HEK293 (cell line): ENCODE measurements at regions of chr3 and their contacts with region 1.

Region 1: DNA sequence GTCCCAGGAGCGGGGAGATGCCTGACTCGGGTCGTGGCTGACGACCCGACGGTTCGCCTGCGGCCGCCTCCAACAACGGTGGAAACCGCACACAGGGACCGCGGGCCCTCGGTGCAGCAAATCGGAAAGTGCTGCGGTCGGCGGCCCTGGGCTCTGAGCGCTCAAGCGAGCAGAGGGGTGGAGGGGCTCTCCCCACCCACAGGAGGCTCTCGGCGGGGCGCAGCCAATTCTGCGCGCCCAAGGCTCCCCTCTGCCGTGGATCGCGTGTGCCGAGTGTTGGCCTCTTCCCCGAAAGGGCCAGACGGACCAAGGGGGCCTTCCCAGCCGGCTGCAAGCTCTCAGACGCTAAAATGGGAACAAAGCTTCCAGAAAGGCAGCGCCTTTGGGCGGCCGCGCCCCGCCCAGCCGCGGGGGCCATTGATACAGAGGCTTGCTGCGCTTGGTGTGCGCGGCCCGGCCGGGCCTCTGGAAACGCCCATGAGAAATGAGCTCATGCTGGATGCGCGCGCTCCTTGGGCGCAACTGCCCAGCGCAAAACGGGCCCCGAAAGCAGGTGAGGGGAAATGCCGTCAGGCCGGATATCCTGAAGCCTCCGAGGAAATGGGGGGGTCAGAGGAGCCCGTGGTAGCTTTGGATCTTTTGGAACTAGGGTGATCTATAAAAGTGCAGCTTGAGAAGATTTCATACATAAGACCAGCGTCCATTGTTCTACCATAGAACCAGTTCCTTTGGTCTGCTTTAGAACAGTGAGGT is 1.2 kb upstream of the GSK3B start:
- H3K4me3 ChIP-seq: peak overlapping the region; percentile 69
- H3K27ac ChIP-seq: peak overlapping the region; percentile 99
- H3K4me1 ChIP-seq: no peaks in the 10 kb centered on the region; the same call in 1 of the 2 replicates
- CTCF ChIP-seq: peak; percentile 15; the same call in 1 of the 2 replicates

Region 2: GRCh38 chr3:119849126-119849525 is 246.3 kb before region 1 on chr3:
- CTCF ChIA-PET with region 1: no interaction called
- POLR2A ChIA-PET with region 1: no interaction called
- H3K4me3 ChIP-seq: no peak overlapping the region
- H3K27ac ChIP-seq: no peak overlapping the region
- H3K4me1 ChIP-seq: no peaks in the 10 kb centered on the region
- CTCF ChIP-seq: no peak

Region 3: DNA sequence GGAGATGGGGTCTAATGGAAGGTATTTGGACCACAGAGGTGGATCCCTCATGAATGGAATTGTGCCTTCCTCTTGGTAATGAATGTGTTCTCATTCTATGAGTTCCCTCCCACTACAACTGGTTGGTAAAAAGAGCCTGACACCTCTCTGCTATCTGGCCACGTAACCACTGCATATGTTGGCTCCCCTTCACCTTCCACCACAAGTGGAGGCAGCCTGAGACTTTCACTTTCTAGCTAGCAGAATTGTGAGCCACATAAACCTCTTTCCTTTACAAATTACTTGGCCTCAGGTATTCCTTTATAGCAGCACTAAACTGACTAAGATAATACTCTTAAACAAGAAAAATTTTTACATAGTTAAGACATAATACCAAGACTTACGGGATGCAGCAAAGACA is 158.2 kb before region 1 on chr3:
- CTCF ChIA-PET with region 1: no interaction called
- POLR2A ChIA-PET with region 1: no interaction called
- H3K4me3 ChIP-seq: no peak overlapping the region
- H3K27ac ChIP-seq: no peak overlapping the region
- H3K4me1 ChIP-seq: no peaks in the 10 kb centered on the region
- CTCF ChIP-seq: no peak

Region 4: DNA sequence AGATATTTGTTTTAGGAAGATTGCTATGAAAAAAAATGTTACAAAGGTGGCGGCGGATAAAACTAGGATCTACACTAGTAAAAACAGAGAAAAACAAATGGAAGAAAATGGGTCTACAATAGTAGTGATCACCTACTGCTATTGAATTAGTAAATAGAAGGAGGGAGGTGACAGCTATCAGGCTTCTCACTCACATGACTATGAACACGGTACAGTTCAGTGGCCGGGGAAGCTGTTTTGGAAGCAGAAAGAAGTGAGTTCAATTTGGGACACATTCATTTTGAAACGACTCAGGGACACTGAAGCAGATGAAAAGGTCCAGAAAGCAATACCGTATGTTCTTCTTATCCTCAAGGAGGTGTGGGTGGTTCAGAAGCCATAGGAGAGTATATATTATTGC is 139.4 kb before region 1 on chr3:
- CTCF ChIA-PET with region 1: no interaction called
- POLR2A ChIA-PET with region 1: no interaction called
- H3K4me3 ChIP-seq: no peak overlapping the region
- H3K27ac ChIP-seq: no peak overlapping the region
- H3K4me1 ChIP-seq: no peaks in the 10 kb centered on the region
- CTCF ChIP-seq: no peak

Region 5: DNA sequence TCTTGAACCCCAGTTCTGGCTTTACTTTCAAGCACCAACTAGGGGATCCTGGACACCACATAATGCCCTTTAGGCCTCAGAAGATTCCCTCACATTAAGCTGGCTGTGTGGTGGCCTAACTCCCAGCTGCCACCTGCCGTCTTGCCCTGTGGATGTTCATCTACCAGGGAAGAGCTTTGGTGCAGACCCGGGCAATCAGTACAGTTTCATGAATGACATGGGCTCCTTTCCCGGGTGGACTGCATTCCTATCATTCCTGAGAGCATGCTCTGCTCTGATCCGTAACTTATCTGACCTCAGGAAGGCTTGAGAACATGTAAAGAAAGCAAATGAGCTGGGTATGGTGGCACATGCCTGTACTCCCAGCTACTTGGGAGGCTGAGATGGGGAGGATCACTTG is 48.9 kb after region 1 on chr3:
- CTCF ChIA-PET with region 1: no interaction called
- POLR2A ChIA-PET with region 1: interaction called, 14 read pairs
- H3K4me3 ChIP-seq: no peak overlapping the region
- H3K27ac ChIP-seq: no peak overlapping the region
- H3K4me1 ChIP-seq: no peaks in the 10 kb centered on the region
- CTCF ChIP-seq: no peak

Region 6: GRCh38 chr3:120172070-120172469 is 76.7 kb after region 1 on chr3:
- CTCF ChIA-PET with region 1: no interaction called
- POLR2A ChIA-PET with region 1: interaction called, 30 read pairs
- H3K4me3 ChIP-seq: no peak overlapping the region
- H3K27ac ChIP-seq: no peak overlapping the region
- H3K4me1 ChIP-seq: no peaks in the 10 kb centered on the region; the same call in 1 of the 2 replicates
- CTCF ChIP-seq: no peak

Region 7: DNA sequence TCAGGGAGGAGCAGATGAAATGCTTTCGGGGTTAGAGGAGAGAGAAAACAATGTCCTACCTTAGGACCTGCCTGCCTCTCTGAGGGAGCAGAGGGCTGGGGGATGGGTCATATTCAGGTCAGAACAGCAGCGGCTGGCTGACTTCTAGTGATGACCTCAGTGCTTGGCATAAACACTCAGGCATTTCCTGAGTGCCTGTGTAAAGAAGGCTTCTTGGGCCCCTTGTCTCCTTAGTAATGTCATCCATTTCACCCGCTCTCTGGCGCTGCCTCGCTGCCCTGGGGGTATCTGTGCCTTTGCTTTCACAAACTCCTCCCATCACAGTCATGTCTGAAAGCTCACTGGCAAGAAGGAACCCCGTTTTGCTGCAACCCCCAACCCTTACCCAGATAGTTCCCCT is 81.7 kb after region 1 on chr3:
- CTCF ChIA-PET with region 1: no interaction called
- POLR2A ChIA-PET with region 1: interaction called, 30 read pairs
- H3K4me3 ChIP-seq: peak overlapping the region; percentile 10; the same call in 1 of the 2 replicates
- H3K27ac ChIP-seq: no peak overlapping the region
- H3K4me1 ChIP-seq: no peaks in the 10 kb centered on the region
- CTCF ChIP-seq: no peak

Region 8: DNA sequence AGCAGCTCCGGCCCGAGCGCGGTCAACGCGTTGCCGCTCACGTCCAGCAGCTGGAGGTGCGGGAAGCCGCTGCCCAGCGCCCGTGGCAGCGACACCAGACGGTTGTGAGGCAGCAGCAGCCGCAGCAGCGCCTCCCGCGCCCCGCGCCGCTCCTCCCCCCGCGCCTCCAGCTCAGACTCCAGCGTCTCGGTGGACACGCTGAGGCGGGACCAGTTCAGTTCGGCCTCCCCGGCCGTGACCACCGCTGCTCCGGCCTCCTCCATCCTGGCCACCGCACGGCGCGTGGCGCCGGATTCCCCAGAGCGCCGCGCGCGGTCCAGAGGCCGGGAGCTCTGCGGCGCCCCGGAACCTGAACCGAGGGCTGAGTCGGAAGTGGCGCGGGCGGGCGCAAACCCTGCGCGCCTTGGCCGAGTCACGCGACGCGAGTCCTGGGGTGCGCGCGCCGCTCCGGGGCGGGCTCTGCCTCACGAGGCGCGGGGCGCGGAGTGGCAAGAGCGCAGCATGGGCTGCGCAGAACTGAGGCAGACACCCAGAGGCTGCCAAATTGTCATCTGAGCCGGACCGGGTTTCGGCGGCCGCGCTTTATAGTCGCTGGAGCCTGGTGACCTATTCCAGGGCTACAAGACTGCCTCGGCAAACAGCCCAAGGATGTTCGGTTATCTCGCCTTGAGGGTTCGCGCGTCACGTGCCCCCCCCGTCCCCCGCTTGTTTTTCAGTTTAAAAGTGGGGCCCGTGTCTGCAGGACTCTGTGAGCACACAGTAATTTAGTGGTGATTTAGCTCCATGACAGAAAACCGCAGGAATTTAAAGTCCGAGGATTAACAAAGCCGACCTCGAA is 253.8 kb after region 1 on chr3 and contains the start of gene LRRC58:
- CTCF ChIA-PET with region 1: no interaction called
- POLR2A ChIA-PET with region 1: interaction called, 13 read pairs
- H3K4me3 ChIP-seq: peak within 1 kb of the TSS; percentile 91
- H3K27ac ChIP-seq: peak within 1 kb of the TSS; percentile 82
- H3K4me1 ChIP-seq: peaks cover 12% of the 10 kb centered on the region
- CTCF ChIP-seq: peak; percentile 89